ENCODE measurements at regions of chr11 and their contacts with region 1.

Region 1: DNA sequence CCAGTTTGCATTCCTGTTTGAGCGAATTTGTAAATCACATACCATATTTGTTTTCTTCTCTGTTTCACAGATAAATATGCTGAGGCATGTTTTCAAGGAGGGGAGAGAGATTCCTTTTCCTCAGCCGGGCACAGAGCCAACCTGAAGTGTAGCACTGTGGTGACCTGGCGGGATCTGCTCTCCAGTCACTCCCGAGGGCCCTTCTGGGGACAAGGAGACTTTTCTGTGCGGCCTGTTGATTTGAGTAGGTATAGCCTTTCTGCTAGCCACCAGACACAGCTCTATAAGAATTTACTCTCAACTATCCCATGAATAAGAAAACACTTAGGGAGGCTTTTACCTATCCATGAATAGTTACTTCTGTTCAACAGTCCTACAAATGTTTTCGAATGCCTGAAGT is 63.5 kb upstream of the FDX1 start:
- DNase-seq: peak; percentile 41 to 68 (median 54)
- H3K4me3 ChIP-seq: no peak overlapping the region
- H3K27ac ChIP-seq: peak overlapping the region in 1 of 2 donors; percentile 11
- H3K4me1 ChIP-seq: peaks cover 2% of the 10 kb centered on the region
- H3K27me3 ChIP-seq: no peaks in the 10 kb centered on the region
- CTCF ChIP-seq: no peak
- EP300 ChIP-seq: no peak
- POLR2A ChIP-seq: no peak

Region 2: DNA sequence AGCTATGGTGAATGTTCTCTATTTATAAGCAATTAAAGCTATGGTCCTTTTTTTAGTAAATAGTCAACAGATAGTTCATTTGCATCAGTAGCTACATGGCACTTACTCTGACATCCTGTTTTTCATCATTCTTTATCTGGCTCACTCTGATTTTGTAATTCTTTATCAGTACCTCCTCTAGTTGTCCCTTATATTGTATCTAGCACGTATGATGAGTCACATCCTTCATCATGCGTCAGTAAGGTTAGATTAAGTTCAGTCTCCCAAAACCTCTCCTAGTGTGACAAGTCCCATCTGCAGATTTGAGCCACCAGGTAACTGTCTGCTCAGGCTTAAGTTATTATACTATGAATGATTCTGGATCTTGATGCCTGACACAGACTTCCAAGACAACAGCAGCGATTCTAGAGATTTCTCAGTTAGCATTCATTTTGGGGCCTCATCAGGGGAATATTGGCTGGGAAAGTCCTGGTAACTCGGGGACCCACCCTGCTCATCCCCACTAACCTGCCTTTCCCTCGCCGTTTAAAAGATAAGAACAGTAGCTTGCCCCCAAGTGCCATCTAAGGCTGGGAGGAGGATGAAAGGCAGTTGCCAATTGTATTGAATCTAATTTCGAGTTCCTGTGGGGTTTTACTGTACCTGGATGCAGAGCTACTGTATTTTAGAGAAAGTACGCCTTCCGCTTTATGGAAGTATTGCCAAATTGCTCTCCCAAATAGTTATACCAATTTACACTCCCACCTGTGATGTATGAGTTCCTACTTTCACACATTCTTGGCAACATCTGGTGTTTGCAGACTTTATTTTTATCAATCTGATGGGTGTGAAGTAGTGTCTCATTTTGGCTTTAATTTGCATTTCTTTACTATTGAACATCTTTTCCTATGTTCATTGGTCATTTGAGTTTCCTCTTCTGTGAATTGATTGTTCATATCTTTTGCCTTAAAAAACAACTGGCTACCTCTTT is 217.2 kb before region 1 on chr11:
- intact Hi-C with region 1: no loop called
- DNase-seq: no peak
- H3K4me3 ChIP-seq: no peak overlapping the region
- H3K27ac ChIP-seq: no peak overlapping the region
- H3K4me1 ChIP-seq: peaks cover 4% of the 10 kb centered on the region
- H3K27me3 ChIP-seq: no peaks in the 10 kb centered on the region
- CTCF ChIP-seq: no peak
- EP300 ChIP-seq: no peak
- POLR2A ChIP-seq: no peak

Region 3: DNA sequence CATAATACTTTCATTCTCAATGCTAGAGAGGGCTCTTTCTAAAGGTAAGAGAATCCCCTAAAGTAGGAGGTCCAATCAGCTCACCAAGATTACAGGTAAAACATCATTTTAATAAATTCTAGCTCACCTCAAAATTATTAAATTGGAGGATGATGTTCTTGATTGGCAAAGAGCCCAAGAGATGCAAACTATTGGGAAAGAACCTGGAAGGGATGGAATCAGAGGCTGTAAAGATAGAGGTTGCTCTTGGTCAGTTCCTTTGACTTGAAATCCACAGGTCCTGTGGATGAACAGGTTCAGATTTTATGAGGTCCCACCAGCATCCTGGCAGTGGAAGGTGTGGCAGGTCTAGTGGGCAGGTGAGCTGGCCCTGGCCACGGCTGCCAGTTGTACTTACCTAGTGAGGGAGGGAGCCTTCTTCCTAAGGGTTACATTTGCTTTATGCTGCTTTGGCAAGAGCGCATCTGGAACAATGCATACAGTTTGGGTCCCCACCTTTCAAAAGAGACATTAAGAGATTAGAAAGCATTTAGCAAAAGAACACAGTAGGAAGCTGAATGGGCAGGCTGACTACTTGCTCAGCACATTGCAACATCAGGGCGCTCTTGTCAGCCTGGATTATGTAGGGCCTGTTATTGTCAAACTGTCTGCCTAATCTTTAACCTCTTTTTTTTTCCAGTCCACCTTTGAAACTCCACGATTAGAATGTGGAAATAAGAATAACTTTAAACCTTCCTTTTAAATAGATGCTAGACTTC is 166.9 kb before region 1 on chr11:
- intact Hi-C with region 1: loop called in 2 of 4 experiments (anchors 2 to 5 kb)
- DNase-seq: no peak
- H3K4me3 ChIP-seq: no peak overlapping the region
- H3K27ac ChIP-seq: no peak overlapping the region
- H3K4me1 ChIP-seq: no peaks in the 10 kb centered on the region
- H3K27me3 ChIP-seq: no peaks in the 10 kb centered on the region
- CTCF ChIP-seq: no peak
- EP300 ChIP-seq: no peak
- POLR2A ChIP-seq: no peak

Region 4: GRCh38 chr11:110447897-110448745 is 81.8 kb after region 1 on chr11:
- intact Hi-C with region 1: no loop called
- DNase-seq: no peak
- H3K4me3 ChIP-seq: no peak overlapping the region
- H3K27ac ChIP-seq: no peak overlapping the region
- H3K4me1 ChIP-seq: no peaks in the 10 kb centered on the region
- H3K27me3 ChIP-seq: no peaks in the 10 kb centered on the region
- CTCF ChIP-seq: peak in 1 of 3 donors; percentile 9
- EP300 ChIP-seq: no peak
- POLR2A ChIP-seq: no peak

Measured in ovary (tissue), 10 donors.